ENCODE measurements at regions of chr3 and their contacts with region 1.

Region 1: DNA sequence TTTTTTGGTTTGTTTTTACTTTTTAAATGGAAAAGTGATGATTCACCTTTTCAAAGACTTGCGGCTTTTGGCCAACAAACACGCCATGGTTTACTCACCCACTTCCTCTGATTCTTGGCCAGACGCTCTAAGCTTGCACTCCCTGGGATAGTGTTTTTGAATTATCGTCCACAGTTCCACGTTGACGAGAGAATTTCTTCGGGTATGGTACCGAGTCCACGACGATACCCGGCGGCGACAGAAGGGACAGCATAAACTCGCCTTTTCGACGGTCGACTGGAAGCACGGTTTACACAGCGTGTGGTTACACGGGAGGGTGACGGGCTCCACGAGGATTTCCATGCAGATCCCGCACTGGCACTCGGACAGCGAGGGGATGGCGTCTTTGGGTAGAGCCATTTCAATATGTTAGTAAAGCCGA is 783 bp downstream of the RNF168 start:
- DNase-seq: peak; percentile 90
- H3K4me3 Mint-ChIP-seq: peak overlapping the region; percentile 98
- H3K27ac Mint-ChIP-seq: peak overlapping the region; percentile 97
- H3K4me1 Mint-ChIP-seq: peaks cover 35% of the 10 kb centered on the region
- H3K27me3 Mint-ChIP-seq: peaks cover 2% of the 10 kb centered on the region

Region 2: DNA sequence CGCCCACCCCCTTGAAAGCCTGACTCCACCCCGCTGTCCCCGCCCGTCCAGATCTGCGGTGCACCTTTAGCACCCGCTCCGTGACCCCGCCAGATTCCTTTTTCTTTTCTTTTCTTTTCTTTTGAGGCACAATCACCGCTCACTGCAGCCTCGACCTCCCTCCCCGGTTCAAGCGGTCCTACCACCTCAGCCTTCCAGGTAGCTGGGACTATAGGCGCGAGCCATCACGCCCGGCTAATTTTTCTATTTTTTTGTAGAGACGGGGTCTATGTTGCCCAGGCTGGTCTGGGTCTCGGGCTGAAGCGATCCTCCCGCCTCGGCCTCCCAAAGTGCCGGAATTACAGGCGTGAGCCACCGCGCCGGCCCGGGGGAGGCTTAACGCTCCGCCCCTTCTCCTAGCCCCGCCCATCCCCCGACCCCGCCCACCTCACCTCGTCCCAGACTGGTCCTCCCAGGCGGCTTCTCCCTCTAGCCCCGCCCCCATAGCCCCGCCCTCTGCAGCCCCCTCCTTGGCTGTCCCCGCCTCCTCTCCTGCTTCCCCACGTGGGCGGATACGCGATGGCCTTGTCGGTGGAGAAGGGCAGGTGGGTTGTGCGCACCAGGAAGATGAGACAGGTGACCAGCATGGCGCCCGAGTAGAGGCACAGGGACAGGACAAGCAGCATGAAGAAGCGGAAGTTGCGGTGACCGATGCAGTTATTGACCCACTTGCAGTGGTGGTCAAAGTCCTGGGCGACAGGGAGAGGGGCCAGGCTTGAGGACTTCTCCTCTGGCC is 294.8 kb before region 1 on chr3:
- intact Hi-C with region 1: loop called (anchors 5 kb)
- DNase-seq: peak; percentile 85
- H3K4me3 Mint-ChIP-seq: peak overlapping the region; percentile 82
- H3K27ac Mint-ChIP-seq: peak overlapping the region; percentile 18
- H3K4me1 Mint-ChIP-seq: peaks cover 16% of the 10 kb centered on the region
- H3K27me3 Mint-ChIP-seq: peaks cover 28% of the 10 kb centered on the region

Region 3: GRCh38 chr3:196317687-196318467 is 184.9 kb before region 1 on chr3 and contains the start of gene DYNLT2B:
- intact Hi-C with region 1: loop called (anchors 2 kb)
- DNase-seq: peak; percentile 97
- H3K4me3 Mint-ChIP-seq: peak within 1 kb of the TSS; percentile 95
- H3K27ac Mint-ChIP-seq: peak within 1 kb of the TSS; percentile 98
- H3K4me1 Mint-ChIP-seq: peaks cover 11% of the 10 kb centered on the region
- H3K27me3 Mint-ChIP-seq: no peaks in the 10 kb centered on the region
- total RNA-seq, gene DYNLT2B: 11.8 and 12.8 TPM in 2 replicates

Region 4: DNA sequence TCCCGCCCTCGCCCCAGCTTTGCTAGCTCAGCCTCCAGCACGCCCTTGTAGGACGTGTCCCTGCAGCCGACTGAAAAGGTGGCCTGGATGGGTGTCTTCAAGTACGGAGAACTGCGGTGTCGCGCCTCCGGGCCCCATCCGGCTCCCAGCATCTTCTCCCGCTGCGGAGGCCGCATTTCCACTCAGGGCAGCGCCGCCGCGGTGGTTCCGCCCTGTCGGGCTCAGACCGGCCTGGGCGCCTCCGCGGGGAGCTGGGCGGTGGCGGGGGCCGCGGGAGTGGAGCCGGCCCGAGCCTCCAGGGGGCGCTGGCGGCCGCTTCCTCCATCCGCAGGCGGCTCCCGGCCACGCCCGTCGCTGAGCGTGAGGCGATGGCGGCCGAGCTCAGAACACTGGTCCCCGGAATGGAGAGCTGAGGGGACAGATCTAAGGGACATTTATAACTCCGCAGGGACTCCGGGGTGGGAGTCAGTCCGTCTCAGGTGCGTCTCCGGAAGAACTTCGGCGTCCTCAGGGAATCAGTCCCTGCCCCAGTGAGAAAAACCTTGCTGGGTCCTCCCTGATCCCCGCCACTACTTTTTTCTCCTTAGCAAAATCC is 26.0 kb after region 1 on chr3:
- intact Hi-C with region 1: loop called (anchors 1 kb)
- DNase-seq: peak; percentile 95
- H3K4me3 Mint-ChIP-seq: peak overlapping the region; percentile 75
- H3K27ac Mint-ChIP-seq: peak overlapping the region; percentile 82
- H3K4me1 Mint-ChIP-seq: peaks cover 12% of the 10 kb centered on the region
- H3K27me3 Mint-ChIP-seq: peaks cover 12% of the 10 kb centered on the region

Region 5: DNA sequence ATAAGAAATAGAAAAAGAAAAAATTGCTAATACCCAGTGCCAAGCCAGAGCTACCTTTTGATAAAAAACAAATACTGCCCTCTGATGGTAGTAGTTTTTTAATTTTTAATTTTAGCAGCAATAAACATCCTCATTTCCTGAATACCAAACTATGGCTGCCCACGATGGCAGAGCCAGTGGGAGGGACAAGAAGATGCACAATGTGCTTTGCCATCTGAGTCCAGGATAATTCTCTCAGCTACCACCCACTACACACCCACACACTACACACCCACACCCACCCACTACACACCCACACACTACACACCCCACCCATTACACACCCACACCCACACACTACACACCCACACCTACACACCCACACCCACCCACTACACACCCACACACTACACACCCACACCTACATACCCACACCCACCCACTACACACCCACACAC is 191.4 kb after region 1 on chr3:
- intact Hi-C with region 1: loop called (anchors 1 kb)
- DNase-seq: peak; percentile 63
- H3K4me3 Mint-ChIP-seq: no peak overlapping the region
- H3K27ac Mint-ChIP-seq: peak overlapping the region; percentile 89
- H3K4me1 Mint-ChIP-seq: peaks cover 17% of the 10 kb centered on the region
- H3K27me3 Mint-ChIP-seq: peaks cover 5% of the 10 kb centered on the region

Region 6: GRCh38 chr3:196942226-196942914 is 439.6 kb after region 1 on chr3 and contains the start of gene NCBP2:
- intact Hi-C with region 1: loop called (anchors 1 kb)
- DNase-seq: peak; percentile 100
- H3K4me3 Mint-ChIP-seq: peak within 1 kb of the TSS; percentile 89
- H3K27ac Mint-ChIP-seq: peak within 1 kb of the TSS; percentile 95
- H3K4me1 Mint-ChIP-seq: peaks cover 41% of the 10 kb centered on the region
- H3K27me3 Mint-ChIP-seq: peaks cover 2% of the 10 kb centered on the region
- total RNA-seq, gene NCBP2: 101 and 105 TPM in 2 replicates

Measured in activated CD4-positive, alpha-beta T cell treated with anti-CD3 and anti-CD28 coated beads, Interleukin-2, amount 10 ng/mL, durations not matched to agents 24 days and 14 days (primary cell).